Caco-2 (cell line): ENCODE measurements at regions of chr4 and their contacts with region 1.

Region 1: DNA sequence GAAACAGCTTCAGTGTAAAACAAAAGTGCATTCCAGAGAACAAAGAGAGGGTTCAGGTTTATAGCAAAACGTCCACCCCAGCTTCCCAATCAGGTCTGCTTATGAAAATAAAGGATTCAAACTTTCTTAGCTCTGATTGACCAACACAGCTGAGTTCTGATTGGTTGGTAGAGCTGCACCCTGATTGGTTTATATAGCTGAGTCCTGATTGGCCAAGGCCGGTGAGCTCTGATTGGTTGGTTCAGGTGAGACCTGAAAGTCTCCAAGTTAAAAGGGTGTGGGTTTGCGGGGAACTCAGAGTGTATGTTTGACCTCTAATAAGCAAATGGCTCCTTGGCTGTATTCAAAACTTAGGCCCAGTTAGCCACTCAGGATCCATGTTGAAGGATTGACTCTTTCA is 20.9 kb downstream of the CLRN2 start:
- DNase-seq: peak in 1 of 2 experiments; percentile 15
- H3K4me3 ChIP-seq: no peak overlapping the region
- H3K4me3 Mint-ChIP-seq: no peak overlapping the region
- H3K27ac Mint-ChIP-seq: no peak overlapping the region
- H3K4me1 ChIP-seq: no peaks in the 10 kb centered on the region
- H3K4me1 Mint-ChIP-seq: no peaks in the 10 kb centered on the region
- H3K27me3 ChIP-seq: no peaks in the 10 kb centered on the region
- H3K27me3 Mint-ChIP-seq: peaks cover 5% of the 10 kb centered on the region
- CTCF ChIP-seq: no peak

Region 2: DNA sequence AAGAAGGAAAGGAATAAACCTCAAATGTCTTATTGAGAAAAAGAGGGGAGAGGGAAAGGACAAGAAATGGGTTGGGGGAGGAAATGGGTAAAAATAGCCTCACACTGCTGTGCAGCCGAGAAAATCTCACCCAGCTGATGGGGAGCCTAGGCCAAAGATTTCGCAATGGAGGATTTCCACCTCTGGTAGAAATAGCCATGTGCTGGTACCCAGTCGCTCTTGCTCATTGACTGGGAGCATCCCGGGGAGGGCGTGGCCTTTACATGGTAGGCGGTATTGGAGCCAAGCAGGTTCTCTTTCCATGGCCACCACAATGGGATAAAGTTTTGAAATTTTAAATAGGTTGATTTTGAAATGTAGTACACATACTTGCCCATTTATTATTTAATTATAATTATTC is 382.3 kb before region 1 on chr4:
- CTCF ChIA-PET with region 1: no interaction called
- POLR2A ChIA-PET with region 1: no interaction called
- intact Hi-C with region 1: no loop called
- DNase-seq: no peak
- H3K4me3 ChIP-seq: no peak overlapping the region
- H3K4me3 Mint-ChIP-seq: no peak overlapping the region
- H3K27ac Mint-ChIP-seq: no peak overlapping the region
- H3K4me1 ChIP-seq: no peaks in the 10 kb centered on the region
- H3K4me1 Mint-ChIP-seq: no peaks in the 10 kb centered on the region
- H3K27me3 ChIP-seq: no peaks in the 10 kb centered on the region
- H3K27me3 Mint-ChIP-seq: peaks cover 1% of the 10 kb centered on the region
- CTCF ChIP-seq: no peak

Region 3: DNA sequence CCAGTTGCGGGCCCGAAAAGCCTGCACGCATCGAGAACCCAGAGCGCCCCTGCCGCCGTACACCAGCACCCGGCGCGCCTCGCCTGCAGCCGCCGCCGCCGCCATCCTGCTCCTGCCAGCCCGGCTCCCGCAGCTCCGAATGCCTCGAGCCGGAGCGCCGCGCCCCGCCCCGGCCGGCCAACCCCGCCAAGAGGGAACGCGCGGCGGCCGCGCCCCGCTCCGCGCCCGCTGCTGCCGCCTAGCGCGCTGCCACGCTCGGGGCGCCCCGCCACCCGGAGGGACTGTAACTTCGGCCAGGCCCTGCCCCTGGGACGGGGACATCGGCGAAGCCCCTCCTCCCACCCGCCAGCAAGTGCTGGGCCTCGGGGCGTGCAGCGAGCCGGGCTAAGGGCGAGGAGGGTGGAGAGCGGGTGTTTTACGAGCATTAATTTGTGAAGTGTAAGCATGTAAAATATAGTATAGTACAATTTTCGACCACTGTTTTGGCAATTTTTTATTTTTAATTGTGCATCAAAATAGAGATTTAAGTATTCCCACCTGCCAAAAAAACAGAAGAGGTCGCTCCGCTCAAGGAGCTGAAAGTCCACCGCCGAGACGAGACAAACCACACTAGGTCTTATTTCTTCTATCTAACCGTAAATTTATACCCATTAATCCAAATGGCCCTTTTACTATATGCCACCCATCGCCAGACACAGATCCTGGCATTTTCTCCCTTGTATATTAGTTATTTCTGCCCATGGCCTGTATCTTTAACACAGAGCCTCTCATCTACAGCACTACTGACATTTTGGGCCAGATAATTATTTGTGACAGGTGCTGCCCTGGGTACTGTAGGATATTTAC is 23.7 kb before region 1 on chr4 and contains the start of gene QDPR:
- CTCF ChIA-PET with region 1: no interaction called
- POLR2A ChIA-PET with region 1: no interaction called
- intact Hi-C with region 1: loop called (anchors 1 kb)
- DNase-seq: peak; percentile 88 to 92
- H3K4me3 ChIP-seq: peak within 1 kb of the TSS; percentile 68
- H3K4me3 Mint-ChIP-seq: peak within 1 kb of the TSS; percentile 83
- H3K27ac Mint-ChIP-seq: peak within 1 kb of the TSS; percentile 79
- H3K4me1 ChIP-seq: peaks cover 8% of the 10 kb centered on the region
- H3K4me1 Mint-ChIP-seq: no peaks in the 10 kb centered on the region
- H3K27me3 ChIP-seq: no peaks in the 10 kb centered on the region
- H3K27me3 Mint-ChIP-seq: no peaks in the 10 kb centered on the region
- CTCF ChIP-seq: peak in 1 of 2 experiments; percentile 33
- total RNA-seq, gene QDPR: 44.8 and 47.3 TPM in 2 replicates